ENCODE measurements at regions of chr16 and their contacts with region 1.

Region 1: GRCh38 chr16:89193021-89193575 is 7.2 kb downstream of the SLC22A31 start:
- H3K4me3 ChIP-seq: no peak overlapping the region
- H3K27ac ChIP-seq: no peak overlapping the region
- H3K4me1 ChIP-seq: no peaks in the 10 kb centered on the region
- CTCF ChIP-seq: no peak

Region 2: DNA sequence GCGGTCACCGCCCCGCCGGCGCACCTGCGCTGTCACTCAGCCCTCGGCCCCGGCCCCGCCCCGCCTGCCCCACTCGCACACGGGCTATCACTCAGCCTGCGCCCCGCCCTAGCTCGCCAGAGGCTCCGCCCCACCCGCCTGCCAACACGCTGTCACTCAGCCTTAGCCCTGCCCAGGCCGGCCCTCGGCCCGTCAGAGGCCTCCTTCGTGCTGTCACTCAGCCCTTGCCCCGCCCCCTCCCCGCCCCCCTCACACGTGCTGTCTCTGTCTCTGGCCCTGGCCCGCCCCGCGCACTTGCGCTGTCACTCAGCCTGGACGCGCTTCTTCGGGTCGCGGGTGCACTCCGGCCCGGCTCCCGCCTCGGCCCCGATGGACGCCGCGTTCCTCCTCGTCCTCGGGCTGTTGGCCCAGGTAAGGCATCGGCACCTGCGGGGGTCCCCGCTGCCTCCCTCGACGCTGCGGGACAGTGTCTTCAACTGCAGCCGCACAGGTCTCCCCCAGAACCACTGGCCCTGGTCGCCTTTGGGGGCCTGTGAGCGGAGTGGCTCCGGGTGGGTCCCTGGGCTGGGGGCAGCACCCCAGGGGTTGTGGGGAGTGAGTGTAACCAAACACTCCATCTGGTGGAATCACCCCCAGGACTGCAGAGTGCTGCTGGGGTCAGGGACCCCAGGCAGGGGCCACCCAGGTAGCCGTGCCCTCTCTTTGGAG is 21.5 kb before region 1 on chr16 and contains the start of gene CDH15:
- CTCF ChIA-PET with region 1: interaction called, 8 read pairs
- POLR2A ChIA-PET with region 1: interaction called, 11 read pairs
- H3K4me3 ChIP-seq: no peak within 1 kb of the TSS
- H3K27ac ChIP-seq: no peak within 1 kb of the TSS
- H3K4me1 ChIP-seq: peaks cover 3% of the 10 kb centered on the region; the same call in 1 of the 2 replicates
- CTCF ChIP-seq: no peak